Ascending aorta (tissue), 2 donors: ENCODE measurements at regions of chr2 and their contacts with region 1.

Region 1: DNA sequence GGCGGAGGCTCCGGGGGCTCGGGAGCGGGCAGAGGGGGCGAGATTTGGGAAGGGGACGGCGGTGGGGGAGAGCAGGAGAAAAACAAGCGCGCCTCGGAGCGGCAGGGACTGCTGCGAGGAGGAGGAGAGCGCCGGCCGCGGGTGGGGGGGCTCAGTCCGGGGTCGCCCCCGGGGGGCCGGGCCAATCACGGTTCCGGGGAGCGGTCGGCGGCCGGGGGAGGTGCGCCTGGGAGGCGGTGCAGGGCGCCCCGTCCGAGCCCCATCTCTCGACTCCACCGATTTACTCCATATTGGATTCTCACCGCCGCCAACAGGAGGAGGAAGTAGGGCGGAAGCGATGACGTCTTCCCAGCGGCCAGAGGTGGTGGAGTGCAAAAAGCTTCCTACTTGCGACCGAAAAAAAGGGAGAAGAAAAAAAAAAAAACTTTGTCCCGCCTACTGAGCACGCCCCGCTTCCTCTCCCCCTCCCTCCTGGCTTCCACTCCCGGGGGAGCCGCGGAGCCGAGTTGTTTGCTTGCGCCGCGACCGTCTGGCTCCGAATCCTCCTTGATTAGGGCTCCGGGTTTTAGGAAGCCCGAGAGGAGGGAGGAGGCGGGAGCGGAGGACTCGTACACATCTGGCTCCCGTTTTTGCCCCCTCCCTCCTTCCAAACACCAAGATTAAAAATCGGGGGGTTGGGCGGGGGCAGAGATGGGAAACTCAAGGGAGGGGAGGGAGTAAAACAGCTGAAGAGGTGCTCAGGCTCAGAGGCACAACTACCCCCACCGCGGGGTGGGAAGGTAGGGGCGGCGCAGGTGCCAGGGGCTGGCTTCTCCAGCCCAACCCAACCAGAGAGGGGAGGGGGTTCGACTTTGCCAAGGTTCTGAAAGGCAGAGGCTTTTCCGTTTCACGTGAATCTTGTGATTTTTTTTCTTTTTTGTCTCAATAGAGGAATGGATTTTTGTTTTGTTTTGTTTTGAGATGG is at the start of gene SPRED2:
- DNase-seq: peak; percentile 81 to 98
- H3K4me3 ChIP-seq: peak within 1 kb of the TSS; percentile 86 to 96
- H3K27ac ChIP-seq: peak within 1 kb of the TSS; percentile 93 to 97
- H3K4me1 ChIP-seq: peaks cover 0 to 12% of the 10 kb centered on the region in 2 donors
- H3K27me3 ChIP-seq: no peaks in the 10 kb centered on the region
- CTCF ChIP-seq: peak in 1 of 3 experiments; percentile 17
- total RNA-seq, gene SPRED2: 18.5 TPM

Region 2: DNA sequence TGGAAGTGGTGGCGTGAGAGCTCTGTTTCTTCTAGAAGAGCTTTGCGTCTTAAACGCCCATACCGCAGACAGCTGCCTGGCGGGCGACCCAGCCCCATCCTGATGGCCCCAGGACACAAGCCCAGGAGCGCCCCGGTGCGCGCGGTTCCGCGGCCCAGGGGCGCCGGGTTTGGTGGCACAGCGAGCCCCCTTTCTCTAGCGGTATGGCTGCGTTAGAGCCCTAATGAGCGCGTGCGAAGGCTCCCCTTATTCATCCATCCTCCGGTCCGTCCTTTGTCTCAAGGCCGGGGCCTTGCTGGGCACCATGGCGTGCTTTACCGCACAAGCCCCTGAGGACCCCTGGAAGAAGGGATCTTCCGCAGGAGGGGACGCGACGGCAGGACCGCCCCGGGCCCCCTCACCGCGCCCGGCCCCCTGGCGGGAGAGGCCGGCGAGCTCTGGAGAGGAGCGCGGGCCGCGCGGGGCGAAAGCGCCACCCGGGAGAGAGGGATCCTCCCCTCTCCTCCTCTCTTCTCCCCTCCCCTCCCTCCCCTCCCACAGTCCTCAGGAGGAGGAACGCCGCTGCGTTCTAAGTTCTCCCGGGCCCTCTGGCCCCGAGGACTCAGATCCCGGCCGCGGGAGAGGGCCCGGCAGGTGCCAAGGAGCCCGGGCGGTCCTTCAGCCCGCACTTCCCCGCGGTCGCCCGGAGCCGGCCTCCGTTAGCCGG is 443.9 kb before region 1 on chr2:
- intact Hi-C with region 1: loop called (anchors 5 kb)
- DNase-seq: peak in 1 of 2 donors; percentile 80
- H3K4me3 ChIP-seq: peak overlapping the region; percentile 99
- H3K27ac ChIP-seq: peak overlapping the region; percentile 97 to 99
- H3K4me1 ChIP-seq: peaks cover 0 to 27% of the 10 kb centered on the region in 2 donors
- H3K27me3 ChIP-seq: no peaks in the 10 kb centered on the region
- CTCF ChIP-seq: peak; percentile 53 to 55 (median 54)

Region 3: GRCh38 chr2:65227425-65228262 is 204.9 kb before region 1 on chr2 and contains the start of gene ACTR2:
- intact Hi-C with region 1: loop called (anchors 1 kb)
- DNase-seq: peak; percentile 86 to 98
- H3K4me3 ChIP-seq: peak within 1 kb of the TSS; percentile 66 to 100
- H3K27ac ChIP-seq: peak within 1 kb of the TSS; percentile 89 to 100
- H3K4me1 ChIP-seq: peaks cover 3 to 36% of the 10 kb centered on the region in 2 donors
- H3K27me3 ChIP-seq: no peaks in the 10 kb centered on the region
- CTCF ChIP-seq: no peak
- total RNA-seq, gene ACTR2: 78.0 TPM

Region 4: GRCh38 chr2:65316072-65316471 is 116.4 kb before region 1 on chr2:
- intact Hi-C with region 1: loop called (anchors 5 kb)
- DNase-seq: peak; percentile 40 to 85
- H3K4me3 ChIP-seq: no peak overlapping the region
- H3K27ac ChIP-seq: peak overlapping the region; percentile 78 to 85
- H3K4me1 ChIP-seq: peaks cover 0 to 16% of the 10 kb centered on the region in 2 donors
- H3K27me3 ChIP-seq: no peaks in the 10 kb centered on the region
- CTCF ChIP-seq: no peak

Region 5: GRCh38 chr2:65329525-65329924 is 103.0 kb before region 1 on chr2:
- intact Hi-C with region 1: no loop called
- DNase-seq: no peak
- H3K4me3 ChIP-seq: no peak overlapping the region
- H3K27ac ChIP-seq: no peak overlapping the region
- H3K4me1 ChIP-seq: no peaks in the 10 kb centered on the region
- H3K27me3 ChIP-seq: no peaks in the 10 kb centered on the region
- CTCF ChIP-seq: no peak

Region 6: DNA sequence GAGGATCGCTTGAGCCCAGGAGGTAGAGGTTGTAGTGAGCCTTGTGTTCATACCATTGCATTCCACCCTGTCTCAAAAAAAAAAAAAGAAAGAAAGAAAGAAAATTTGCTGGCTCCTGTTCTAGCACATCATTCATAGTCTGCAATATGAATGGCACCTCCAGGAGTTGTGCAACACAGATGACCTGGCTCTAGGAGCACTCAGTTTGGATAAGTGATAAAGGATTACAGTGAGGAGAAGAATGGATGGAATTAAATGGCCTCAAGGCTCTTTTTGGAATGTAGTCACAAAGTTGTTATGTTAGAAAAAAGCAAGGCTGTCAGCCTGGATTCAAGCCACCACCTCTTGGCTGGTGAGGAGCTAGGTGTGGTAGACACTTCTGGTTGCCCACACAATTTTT is 21.4 kb after region 1 on chr2:
- intact Hi-C with region 1: no loop called
- DNase-seq: no peak
- H3K4me3 ChIP-seq: no peak overlapping the region
- H3K27ac ChIP-seq: no peak overlapping the region
- H3K4me1 ChIP-seq: no peaks in the 10 kb centered on the region
- H3K27me3 ChIP-seq: no peaks in the 10 kb centered on the region
- CTCF ChIP-seq: no peak

Region 7: GRCh38 chr2:65553504-65554074 is 121.1 kb after region 1 on chr2:
- intact Hi-C with region 1: loop called (anchors 2 kb)
- DNase-seq: no peak
- H3K4me3 ChIP-seq: peak overlapping the region; percentile 29 to 56
- H3K27ac ChIP-seq: no peak overlapping the region
- H3K4me1 ChIP-seq: peaks cover 0 to 4% of the 10 kb centered on the region in 2 donors
- H3K27me3 ChIP-seq: no peaks in the 10 kb centered on the region
- CTCF ChIP-seq: no peak